GM12878 (cell line): ENCODE measurements at regions of chr19 and their contacts with region 1.

Region 1: GRCh38 chr19:44723952-44724319 is 24.6 kb upstream of the BCL3 start:
- DNase-seq: peak; percentile 54
- ATAC-seq: peak; percentile 91
- H3K4me3 ChIP-seq: no peak overlapping the region
- H3K27ac ChIP-seq: peak overlapping the region; percentile 6; the same call in 1 of the 2 replicates
- H3K4me1 ChIP-seq: peaks cover 50% of the 10 kb centered on the region
- H3K27me3 ChIP-seq: no peaks in the 10 kb centered on the region
- CTCF ChIP-seq: peak; percentile 97 to 99 (median 98); a peak in 5 of 6 replicates
- EP300 ChIP-seq: no peak
- POLR2A ChIP-seq: no peak
- RAD21 ChIP-seq: peak; percentile 97

Region 2: GRCh38 chr19:44623080-44623479 is 100.9 kb before region 1 on chr19:
- CTCF ChIA-PET with region 1: no interaction called
- POLR2A ChIA-PET with region 1: no interaction called
- RAD21 ChIA-PET with region 1: no interaction called
- SMC1A ChIA-PET with region 1: no interaction called
- in situ Hi-C with region 1: no loop called
- intact Hi-C with region 1: no loop called
- DNase-seq: no peak
- ATAC-seq: no peak
- H3K4me3 ChIP-seq: no peak overlapping the region
- H3K27ac ChIP-seq: no peak overlapping the region
- H3K4me1 ChIP-seq: no peaks in the 10 kb centered on the region
- H3K27me3 ChIP-seq: no peaks in the 10 kb centered on the region
- CTCF ChIP-seq: no peak
- EP300 ChIP-seq: no peak
- POLR2A ChIP-seq: no peak
- RAD21 ChIP-seq: no peak

Region 3: DNA sequence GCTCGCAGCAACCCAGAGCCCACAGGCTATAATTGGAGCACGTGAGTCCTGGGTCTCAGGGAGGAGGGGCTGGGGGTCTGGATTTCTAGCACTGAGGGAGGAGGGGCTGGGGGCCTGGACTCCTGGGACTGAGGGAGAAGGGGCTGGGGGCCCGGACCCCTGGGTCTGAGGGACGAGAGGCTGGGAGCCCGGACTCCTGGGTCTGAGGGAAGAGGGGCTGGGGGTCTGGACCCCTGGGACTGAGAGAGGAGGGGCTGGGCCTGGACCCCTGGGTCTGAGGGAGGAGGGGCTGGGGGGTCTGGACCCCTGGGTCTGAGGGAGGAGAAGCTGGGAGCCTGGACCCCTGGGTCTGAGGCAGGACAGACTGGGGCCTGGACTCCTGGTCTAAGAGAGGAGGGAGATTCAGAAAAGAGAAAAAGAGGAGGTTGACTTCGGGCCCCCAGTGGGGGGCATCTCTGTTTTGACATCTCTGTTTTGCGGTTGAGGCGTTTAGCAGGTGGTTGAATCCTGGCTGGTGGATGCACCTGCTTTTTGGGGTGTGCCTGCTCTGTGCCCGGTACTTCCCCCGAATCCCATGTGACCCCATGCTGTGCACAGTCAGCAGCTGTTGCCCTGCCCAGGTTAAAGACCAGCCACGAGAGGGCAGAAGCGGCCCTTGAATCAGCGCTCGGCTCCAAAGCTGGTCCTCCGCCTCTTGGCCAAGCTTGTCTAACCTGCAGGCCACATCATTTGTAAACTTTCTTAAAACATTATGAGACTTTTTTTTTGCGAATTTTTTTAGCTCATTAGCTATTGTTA is 69.8 kb before region 1 on chr19:
- CTCF ChIA-PET with region 1: interaction called, 46 read pairs
- POLR2A ChIA-PET with region 1: no interaction called
- RAD21 ChIA-PET with region 1: interaction called, 7 read pairs
- SMC1A ChIA-PET with region 1: interaction called, 12 read pairs
- in situ Hi-C with region 1: no loop called
- intact Hi-C with region 1: loop called (anchors 2 kb)
- DNase-seq: peak; percentile 38
- ATAC-seq: peak; percentile 99
- H3K4me3 ChIP-seq: no peak overlapping the region
- H3K27ac ChIP-seq: no peak overlapping the region
- H3K4me1 ChIP-seq: no peaks in the 10 kb centered on the region; the same call in 1 of the 2 replicates
- H3K27me3 ChIP-seq: no peaks in the 10 kb centered on the region
- CTCF ChIP-seq: peak; percentile 81 to 94 (median 87); a peak in 5 of 6 replicates
- EP300 ChIP-seq: no peak
- POLR2A ChIP-seq: no peak
- RAD21 ChIP-seq: peak; percentile 83

Region 4: DNA sequence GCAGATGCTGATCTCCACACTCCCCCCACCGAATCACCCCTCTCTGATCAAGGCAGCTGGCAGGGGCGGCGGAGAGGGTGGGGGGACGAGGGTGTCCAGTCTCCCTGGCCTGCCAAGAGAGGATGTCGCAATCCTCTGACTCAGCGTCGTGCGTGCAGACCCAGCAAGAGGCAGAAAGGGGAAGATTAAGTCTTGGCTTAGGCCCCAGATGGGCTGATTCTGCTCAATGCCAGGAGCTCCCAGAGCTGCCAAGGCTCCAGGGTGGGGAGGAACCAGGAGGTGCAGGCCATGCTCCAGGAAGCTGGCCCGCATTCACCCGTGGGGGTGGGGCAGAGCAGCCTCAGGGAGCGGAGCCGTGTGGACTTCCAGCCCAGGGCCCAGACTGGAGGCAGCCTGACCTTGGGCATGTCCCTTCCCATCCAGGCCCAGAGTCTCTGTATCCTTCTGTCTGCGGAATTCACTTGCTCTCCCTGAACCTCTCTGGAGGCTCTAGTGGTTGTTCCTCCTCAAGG is 18.0 kb after region 1 on chr19:
- CTCF ChIA-PET with region 1: interaction called, 34 read pairs
- POLR2A ChIA-PET with region 1: interaction called, 11 read pairs
- RAD21 ChIA-PET with region 1: interaction called, 42 read pairs
- SMC1A ChIA-PET with region 1: interaction called, 43 read pairs
- in situ Hi-C with region 1: no loop called
- intact Hi-C with region 1: no loop called
- DNase-seq: no peak
- ATAC-seq: no peak
- H3K4me3 ChIP-seq: no peak overlapping the region
- H3K27ac ChIP-seq: no peak overlapping the region
- H3K4me1 ChIP-seq: peaks cover 33% of the 10 kb centered on the region
- H3K27me3 ChIP-seq: no peaks in the 10 kb centered on the region
- CTCF ChIP-seq: no peak
- EP300 ChIP-seq: no peak
- POLR2A ChIP-seq: no peak
- RAD21 ChIP-seq: no peak

Region 5: DNA sequence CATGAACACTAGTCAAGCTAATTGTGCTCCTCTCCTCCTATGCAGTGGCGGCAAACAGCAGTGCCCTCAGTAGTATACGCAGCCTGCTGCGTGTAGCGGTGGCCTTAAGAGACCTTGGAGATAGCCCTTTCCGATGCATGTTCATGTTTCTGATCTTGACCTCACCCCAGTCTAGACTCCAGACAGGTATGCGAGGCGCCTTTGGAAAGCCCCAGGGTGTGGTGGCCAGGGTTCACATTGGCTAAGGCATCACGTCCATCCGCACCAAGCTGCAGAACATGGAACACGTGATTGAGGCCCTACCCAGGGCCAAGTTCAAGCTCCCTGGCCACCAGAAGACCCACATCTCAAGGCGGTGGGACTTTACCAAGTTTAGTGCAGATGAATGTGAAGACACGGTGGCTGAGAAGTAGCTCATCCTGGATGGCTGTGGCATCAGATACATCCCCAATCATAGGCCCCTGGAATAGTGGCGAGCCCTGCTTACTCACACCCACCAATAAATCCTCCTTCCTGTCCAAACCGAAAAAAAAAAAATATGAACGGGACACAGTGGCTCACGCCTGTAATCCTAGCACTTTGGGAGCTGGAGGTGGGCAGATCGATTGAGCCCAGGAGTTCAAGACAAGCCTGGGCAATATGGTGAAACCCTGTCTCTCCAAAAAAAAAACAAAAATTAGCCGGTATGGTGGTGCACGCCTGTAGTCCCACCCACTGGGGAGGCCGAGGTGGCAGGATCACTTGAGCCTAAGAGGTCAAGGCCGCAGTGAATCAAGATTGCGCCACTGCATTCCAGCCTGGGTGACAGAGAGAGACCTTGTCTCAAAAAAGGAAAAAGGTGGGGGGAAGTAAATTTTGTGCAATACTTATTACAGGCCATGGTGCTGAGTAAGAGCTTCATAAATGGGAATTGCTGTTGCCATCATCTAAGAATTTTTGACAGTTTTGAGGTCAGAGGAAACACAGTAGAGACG is 41.3 kb after region 1 on chr19:
- CTCF ChIA-PET with region 1: interaction called, 513 read pairs
- POLR2A ChIA-PET with region 1: interaction called, 26 read pairs
- RAD21 ChIA-PET with region 1: interaction called, 302 read pairs
- SMC1A ChIA-PET with region 1: interaction called, 328 read pairs
- in situ Hi-C with region 1: loop called (anchors 5 kb)
- intact Hi-C with region 1: loop called (anchors 1 kb)
- DNase-seq: no peak
- ATAC-seq: no peak
- H3K4me3 ChIP-seq: no peak overlapping the region
- H3K27ac ChIP-seq: no peak overlapping the region
- H3K4me1 ChIP-seq: peaks cover 20% of the 10 kb centered on the region
- H3K27me3 ChIP-seq: no peaks in the 10 kb centered on the region
- CTCF ChIP-seq: no peak
- EP300 ChIP-seq: no peak
- POLR2A ChIP-seq: no peak
- RAD21 ChIP-seq: no peak

Region 6: DNA sequence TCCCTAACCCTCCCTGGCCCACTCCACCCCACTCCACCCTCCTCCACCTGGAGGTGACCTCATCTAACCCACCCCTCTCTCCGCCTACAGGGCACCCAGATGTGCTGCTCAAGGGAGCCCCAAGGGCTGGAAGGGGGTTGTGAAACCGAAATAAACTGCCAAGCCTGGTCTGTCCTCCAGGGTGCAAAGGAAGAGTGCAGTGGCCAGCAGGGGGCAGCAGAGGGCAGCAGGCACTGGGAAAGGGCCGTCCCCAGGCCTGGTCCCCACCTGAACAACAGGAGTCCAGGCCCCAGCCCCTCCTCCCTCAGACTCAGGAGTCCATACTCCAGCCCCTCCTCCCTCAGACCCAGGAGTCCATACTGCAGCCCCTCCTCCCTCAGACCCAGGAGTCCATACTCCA is 76.5 kb after region 1 on chr19:
- CTCF ChIA-PET with region 1: interaction called, 18 read pairs
- POLR2A ChIA-PET with region 1: no interaction called
- RAD21 ChIA-PET with region 1: interaction called, 4 read pairs
- SMC1A ChIA-PET with region 1: interaction called, 4 read pairs
- in situ Hi-C with region 1: no loop called
- intact Hi-C with region 1: no loop called
- DNase-seq: peak; percentile 34
- ATAC-seq: peak; percentile 99
- H3K4me3 ChIP-seq: no peak overlapping the region
- H3K27ac ChIP-seq: no peak overlapping the region
- H3K4me1 ChIP-seq: peaks cover 21% of the 10 kb centered on the region
- H3K27me3 ChIP-seq: no peaks in the 10 kb centered on the region; a peak in 1 of 4 replicates
- CTCF ChIP-seq: peak; percentile 87 to 98 (median 95)
- EP300 ChIP-seq: no peak; a peak in 1 of 4 replicates
- POLR2A ChIP-seq: no peak
- RAD21 ChIP-seq: peak; percentile 72

Region 7: GRCh38 chr19:44820648-44821609 is 97.0 kb after region 1 on chr19:
- CTCF ChIA-PET with region 1: no interaction called
- POLR2A ChIA-PET with region 1: no interaction called
- RAD21 ChIA-PET with region 1: no interaction called
- SMC1A ChIA-PET with region 1: no interaction called
- in situ Hi-C with region 1: no loop called
- intact Hi-C with region 1: no loop called
- DNase-seq: no peak
- ATAC-seq: no peak
- H3K4me3 ChIP-seq: no peak overlapping the region
- H3K27ac ChIP-seq: no peak overlapping the region
- H3K4me1 ChIP-seq: no peaks in the 10 kb centered on the region
- H3K27me3 ChIP-seq: 0 out of 4 replicates have a peak, but pooled peaks cover 0 to 1% of the 10 kb centered on the region in 2 experiments
- CTCF ChIP-seq: no peak
- EP300 ChIP-seq: no peak
- POLR2A ChIP-seq: no peak
- RAD21 ChIP-seq: no peak

Region 8: GRCh38 chr19:44954824-44955586 is 231.1 kb after region 1 on chr19 and contains the start of gene CLPTM1:
- CTCF ChIA-PET with region 1: interaction called, 12 read pairs
- POLR2A ChIA-PET with region 1: no interaction called
- RAD21 ChIA-PET with region 1: interaction called, 5 read pairs
- SMC1A ChIA-PET with region 1: no interaction called
- in situ Hi-C with region 1: no loop called
- intact Hi-C with region 1: no loop called
- DNase-seq: peak; percentile 92
- ATAC-seq: peak; percentile 95
- H3K4me3 ChIP-seq: peak within 1 kb of the TSS; percentile 80
- H3K27ac ChIP-seq: peak within 1 kb of the TSS; percentile 100
- H3K4me1 ChIP-seq: peaks cover 10% of the 10 kb centered on the region
- H3K27me3 ChIP-seq: no peaks in the 10 kb centered on the region
- CTCF ChIP-seq: no peak
- EP300 ChIP-seq: no peak
- POLR2A ChIP-seq: peak; percentile 85
- RAD21 ChIP-seq: no peak
- polyA plus RNA-seq, gene CLPTM1: 0.42 to 2.3 TPM